K562 (cell line): ENCODE measurements at regions of chr1 and their contacts with region 1.

Region 1: GRCh38 chr1:52702886-52703787 is 5.0 kb upstream of the COA7 start:
- DNase-seq: peak; percentile 94 to 97 (median 95)
- ATAC-seq: peak; percentile 94
- H3K4me3 ChIP-seq: peak overlapping the region; percentile 26
- H3K27ac ChIP-seq: peak overlapping the region; percentile 61; the same call in 2 of the 3 replicates
- H3K4me1 ChIP-seq: peaks cover 9 to 13% of the 10 kb centered on the region in 2 experiments; a peak in 4 of 5 replicates
- H3K27me3 ChIP-seq: no peaks in the 10 kb centered on the region
- CTCF ChIP-seq: no peak
- EP300 ChIP-seq: peak; percentile 42; the same call in 1 of the 2 replicates
- POLR2A ChIP-seq: peak; percentile 71
- RAD21 ChIP-seq: no peak

Region 2: DNA sequence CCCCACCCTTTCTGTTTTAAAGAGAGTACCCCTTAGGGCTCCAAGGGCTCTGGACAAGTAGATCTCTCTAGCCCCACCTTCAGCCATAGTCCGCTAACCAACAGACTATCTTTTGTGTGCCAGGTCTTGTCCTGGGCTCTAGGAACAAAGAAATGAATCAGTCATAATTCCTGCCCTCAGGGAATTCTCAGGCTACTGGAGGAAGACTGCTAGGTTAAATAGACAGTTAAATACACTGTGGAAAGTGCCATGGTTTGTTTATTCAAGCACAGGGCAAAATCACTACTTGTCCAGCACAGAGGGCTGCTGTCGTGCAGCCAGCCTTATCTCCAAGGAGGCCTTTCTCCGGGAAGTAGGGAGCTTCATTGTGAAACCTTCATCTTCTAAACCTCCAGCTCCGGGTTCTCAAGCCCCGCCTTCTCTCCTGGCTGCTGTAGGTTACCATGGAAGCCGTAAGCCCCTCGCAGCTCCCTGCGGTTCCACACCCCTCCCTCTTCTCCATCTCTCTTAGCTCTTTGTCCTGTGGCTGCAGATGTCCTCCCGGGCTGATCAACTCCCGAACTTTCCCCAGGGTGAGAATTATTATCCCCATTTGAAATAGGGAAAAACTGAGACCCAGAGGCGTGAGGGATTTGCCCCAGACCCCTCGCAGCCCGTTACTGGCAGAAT is 40.4 kb before region 1 on chr1:
- CTCF ChIA-PET with region 1: no interaction called
- POLR2A ChIA-PET with region 1: no interaction called
- in situ Hi-C with region 1: no loop called
- intact Hi-C with region 1: no loop called
- DNase-seq: no peak
- ATAC-seq: no peak; the same call in 2 of the 3 replicates
- H3K4me3 ChIP-seq: no peak overlapping the region
- H3K27ac ChIP-seq: no peak overlapping the region
- H3K4me1 ChIP-seq: peaks cover 2% of the 10 kb centered on the region in 2 experiments; a peak in 3 of 5 replicates
- H3K27me3 ChIP-seq: no peaks in the 10 kb centered on the region
- CTCF ChIP-seq: no peak
- EP300 ChIP-seq: no peak
- POLR2A ChIP-seq: no peak
- RAD21 ChIP-seq: 0 out of 4 replicates have a peak, but pooled peaks of 1 of the 2 experiments have one; percentile 5

Region 3: GRCh38 chr1:52674497-52675384 is 28.4 kb before region 1 on chr1:
- CTCF ChIA-PET with region 1: no interaction called
- POLR2A ChIA-PET with region 1: no interaction called
- in situ Hi-C with region 1: no loop called
- intact Hi-C with region 1: no loop called
- DNase-seq: peak; percentile 75 to 83 (median 79)
- ATAC-seq: peak; percentile 91
- H3K4me3 ChIP-seq: no peak overlapping the region
- H3K27ac ChIP-seq: peak overlapping the region; percentile 51
- H3K4me1 ChIP-seq: peaks cover 0 to 22% of the 10 kb centered on the region in 2 experiments; a peak in 4 of 5 replicates
- H3K27me3 ChIP-seq: no peaks in the 10 kb centered on the region
- CTCF ChIP-seq: no peak
- EP300 ChIP-seq: peak; percentile 91
- POLR2A ChIP-seq: no peak
- RAD21 ChIP-seq: no peak

Region 4: GRCh38 chr1:52748119-52748518 is 45.0 kb after region 1 on chr1:
- CTCF ChIA-PET with region 1: interaction called, 8 read pairs
- POLR2A ChIA-PET with region 1: no interaction called
- in situ Hi-C with region 1: no loop called
- intact Hi-C with region 1: loop called (anchors 1 kb)
- DNase-seq: no peak
- ATAC-seq: no peak
- H3K4me3 ChIP-seq: no peak overlapping the region
- H3K27ac ChIP-seq: no peak overlapping the region
- H3K4me1 ChIP-seq: peaks cover 9 to 16% of the 10 kb centered on the region in 2 experiments; a peak in 3 of 5 replicates
- H3K27me3 ChIP-seq: no peaks in the 10 kb centered on the region
- CTCF ChIP-seq: peak in 1 of 3 experiments; percentile 25; a peak in 2 of 6 replicates
- EP300 ChIP-seq: no peak
- POLR2A ChIP-seq: no peak
- RAD21 ChIP-seq: peak in 1 of 2 experiments; percentile 34; a peak in 2 of 4 replicates

Region 5: DNA sequence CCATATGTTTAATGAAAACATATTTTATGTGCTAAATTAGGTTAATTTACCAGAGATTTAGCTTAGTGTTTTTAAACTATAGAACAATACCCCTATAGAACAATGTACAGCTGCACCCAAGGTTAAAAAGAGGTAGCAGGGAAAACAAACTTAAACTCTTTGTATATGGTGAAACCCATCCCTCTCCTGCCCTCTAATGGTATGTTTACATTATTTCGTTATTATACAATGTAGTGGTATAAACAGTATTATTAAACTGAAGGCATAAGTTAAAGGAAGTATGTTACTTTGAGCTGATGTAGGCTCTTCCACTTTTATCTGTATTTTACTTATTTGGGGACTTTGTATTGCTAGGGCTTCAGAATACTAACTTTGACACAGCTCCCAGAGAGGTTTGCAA is 122.7 kb after region 1 on chr1:
- CTCF ChIA-PET with region 1: interaction called, 3 read pairs
- POLR2A ChIA-PET with region 1: no interaction called
- in situ Hi-C with region 1: no loop called
- intact Hi-C with region 1: loop called (anchors 1 kb)
- DNase-seq: peak in 1 of 4 experiments; percentile 25
- ATAC-seq: peak; percentile 77
- H3K4me3 ChIP-seq: no peak overlapping the region
- H3K27ac ChIP-seq: no peak overlapping the region
- H3K4me1 ChIP-seq: no peaks in the 10 kb centered on the region
- H3K27me3 ChIP-seq: no peaks in the 10 kb centered on the region
- CTCF ChIP-seq: peak; percentile 21 to 66 (median 48); a peak in 5 of 6 replicates
- EP300 ChIP-seq: no peak
- POLR2A ChIP-seq: no peak
- RAD21 ChIP-seq: peak; percentile 47 to 70

Region 6: GRCh38 chr1:52970149-52970548 is 267.0 kb after region 1 on chr1:
- CTCF ChIA-PET with region 1: no interaction called
- POLR2A ChIA-PET with region 1: no interaction called
- in situ Hi-C with region 1: no loop called
- intact Hi-C with region 1: loop called (anchors 1 kb)
- DNase-seq: peak in 2 of 4 experiments; percentile 27 to 51
- ATAC-seq: peak; percentile 98
- H3K4me3 ChIP-seq: no peak overlapping the region
- H3K27ac ChIP-seq: no peak overlapping the region
- H3K4me1 ChIP-seq: no peaks in the 10 kb centered on the region
- H3K27me3 ChIP-seq: no peaks in the 10 kb centered on the region
- CTCF ChIP-seq: peak; percentile 52 to 71 (median 54)
- EP300 ChIP-seq: no peak
- POLR2A ChIP-seq: no peak
- RAD21 ChIP-seq: peak; percentile 62 to 81